ENCODE measurements at regions of chr4 and their contacts with region 1.

Region 1: DNA sequence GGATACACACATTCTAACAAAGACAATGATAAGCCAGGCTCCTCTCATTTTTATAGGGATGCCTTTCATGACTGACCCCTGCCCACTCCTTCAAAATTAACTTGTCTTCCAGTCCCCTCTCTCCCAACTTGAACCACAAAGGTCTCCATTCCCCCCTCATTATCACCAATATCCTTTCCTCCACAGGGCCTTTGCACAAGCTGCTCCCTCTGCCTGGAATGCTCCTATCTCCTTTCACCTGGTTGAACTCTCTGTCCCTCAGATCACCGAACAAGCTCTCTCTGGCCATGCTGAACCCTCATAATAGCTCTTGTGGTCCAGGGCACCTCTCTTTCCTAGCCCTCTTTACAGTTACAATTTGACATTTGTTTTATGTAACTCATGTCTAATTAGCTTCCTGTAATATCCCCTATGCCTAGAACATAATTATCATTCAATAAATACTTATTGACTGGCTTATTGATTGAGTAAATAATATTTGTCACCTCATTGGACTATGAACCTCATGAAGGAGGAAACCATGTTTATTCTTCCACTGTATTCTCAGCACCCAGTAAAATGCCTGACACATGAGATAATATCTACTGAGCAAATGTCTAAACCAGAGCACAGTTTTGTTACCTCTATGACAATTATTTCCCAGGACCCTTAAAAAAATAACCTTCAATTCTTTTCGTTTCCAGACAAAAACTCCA is 266.3 kb upstream of the RASGEF1B start:
- DNase-seq: no peak
- ATAC-seq: no peak
- H3K4me3 ChIP-seq: no peak overlapping the region
- H3K4me3 Mint-ChIP-seq: no peak overlapping the region
- H3K27ac ChIP-seq: no peak overlapping the region
- H3K27ac Mint-ChIP-seq: no peak overlapping the region
- H3K4me1 ChIP-seq: no peaks in the 10 kb centered on the region
- H3K4me1 Mint-ChIP-seq: no peaks in the 10 kb centered on the region
- H3K27me3 ChIP-seq: no peaks in the 10 kb centered on the region
- H3K27me3 Mint-ChIP-seq: no peaks in the 10 kb centered on the region
- CTCF ChIP-seq: no peak

Region 2: DNA sequence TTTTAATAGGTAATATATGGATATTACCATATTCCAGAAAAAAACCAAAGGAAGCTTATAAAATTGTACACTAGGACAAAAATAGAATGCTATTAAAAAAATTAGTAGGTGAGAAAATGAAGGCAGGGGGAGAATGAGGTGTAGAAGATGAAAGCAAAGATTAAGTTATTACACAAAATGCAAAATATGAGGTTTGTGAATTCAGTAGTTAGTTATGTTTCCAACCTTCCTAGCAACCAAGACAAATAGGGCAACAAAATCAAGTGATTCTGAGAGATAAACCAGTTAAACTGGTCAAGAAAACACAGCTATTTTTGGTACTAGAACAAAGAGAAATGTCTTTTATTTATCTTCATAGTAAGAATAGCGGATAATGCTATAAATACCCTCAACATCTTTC is 33.7 kb after region 1 on chr4:
- CTCF ChIA-PET with region 1: no interaction called
- POLR2A ChIA-PET with region 1: no interaction called
- intact Hi-C with region 1: loop called in 1 of 2 experiments (anchors 1 kb)
- DNase-seq: no peak
- ATAC-seq: no peak
- H3K4me3 ChIP-seq: no peak overlapping the region
- H3K4me3 Mint-ChIP-seq: no peak overlapping the region
- H3K27ac ChIP-seq: no peak overlapping the region
- H3K27ac Mint-ChIP-seq: no peak overlapping the region
- H3K4me1 ChIP-seq: no peaks in the 10 kb centered on the region
- H3K4me1 Mint-ChIP-seq: no peaks in the 10 kb centered on the region
- H3K27me3 ChIP-seq: no peaks in the 10 kb centered on the region
- H3K27me3 Mint-ChIP-seq: peaks cover 6% of the 10 kb centered on the region
- CTCF ChIP-seq: no peak

Region 3: DNA sequence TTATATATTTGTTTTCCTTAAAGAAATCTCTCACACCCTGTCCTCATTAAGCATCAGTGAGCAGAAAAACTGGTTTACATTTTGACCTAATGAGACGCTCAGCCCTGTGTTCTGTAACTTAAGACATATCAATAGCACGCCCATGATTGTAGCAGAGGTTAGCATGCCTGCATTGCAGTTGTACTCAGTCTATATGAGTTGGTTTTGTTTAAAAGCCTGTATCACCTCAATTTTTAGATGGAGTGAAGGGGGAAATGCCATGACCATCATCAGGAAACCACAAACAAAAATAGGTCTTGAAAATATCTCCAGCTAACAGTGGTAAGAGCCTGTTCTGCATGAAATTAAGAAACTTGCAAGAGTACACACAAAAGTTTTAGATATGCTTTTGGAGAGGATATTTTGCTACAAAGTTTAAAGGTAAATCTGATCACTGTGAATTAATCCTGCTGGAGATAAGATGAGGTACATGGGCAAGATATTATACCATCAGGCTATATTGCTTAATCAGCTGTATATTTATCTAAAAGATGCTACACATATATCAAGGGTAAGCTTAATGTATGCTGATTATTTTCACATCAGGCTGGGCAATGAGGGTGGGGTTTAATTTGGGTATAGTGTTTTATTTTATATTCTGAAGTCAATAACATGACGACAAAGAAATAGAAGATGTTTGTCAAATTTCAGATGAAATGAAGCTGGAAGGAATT is 1559.7 kb after region 1 on chr4:
- CTCF ChIA-PET with region 1: no interaction called
- POLR2A ChIA-PET with region 1: no interaction called
- intact Hi-C with region 1: no loop called
- DNase-seq: peak in 1 of 14 experiments; percentile 27
- ATAC-seq: peak; percentile 24
- H3K4me3 ChIP-seq: no peak overlapping the region
- H3K4me3 Mint-ChIP-seq: no peak overlapping the region
- H3K27ac ChIP-seq: peak overlapping the region in 1 of 2 donors; percentile 6
- H3K27ac Mint-ChIP-seq: peak overlapping the region; percentile 50
- H3K4me1 ChIP-seq: peaks cover 7% of the 10 kb centered on the region
- H3K4me1 Mint-ChIP-seq: peaks cover 11% of the 10 kb centered on the region
- H3K27me3 ChIP-seq: no peaks in the 10 kb centered on the region
- H3K27me3 Mint-ChIP-seq: no peaks in the 10 kb centered on the region
- CTCF ChIP-seq: no peak